ENCODE measurements at regions of chr12 and their contacts with region 1.

Region 1: GRCh38 chr12:51391283-51392162 is at the start of gene GALNT6:
- DNase-seq: peak; percentile 70
- ATAC-seq: peak; percentile 57
- H3K4me3 ChIP-seq: peak within 1 kb of the TSS; percentile 88
- H3K27ac ChIP-seq: peak within 1 kb of the TSS; percentile 97
- H3K4me1 ChIP-seq: peaks cover 80% of the 10 kb centered on the region
- H3K27me3 ChIP-seq: no peaks in the 10 kb centered on the region
- CTCF ChIP-seq: no peak
- total RNA-seq, gene GALNT6: 93.4 and 101 TPM in 2 replicates

Region 2: DNA sequence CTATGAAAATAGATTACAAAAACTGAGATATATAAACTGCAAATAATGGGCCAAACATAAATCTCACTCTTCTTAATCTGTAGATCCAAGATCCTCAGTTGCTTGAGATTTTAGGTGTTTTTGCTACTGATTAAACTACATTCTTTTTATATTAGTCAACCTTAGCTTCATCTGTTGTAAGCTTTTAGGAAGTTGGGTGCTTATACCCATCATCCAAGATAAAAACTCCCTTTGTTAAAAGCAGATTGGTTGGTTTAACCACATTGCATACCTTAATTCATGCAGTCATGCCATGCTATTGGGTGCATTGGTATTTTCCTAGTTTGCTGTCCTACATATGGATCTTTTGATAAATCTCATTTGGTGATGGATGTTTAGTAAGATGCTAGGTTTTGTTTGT is 932.9 kb before region 1 on chr12:
- CTCF ChIA-PET with region 1: no interaction called
- POLR2A ChIA-PET with region 1: interaction called, 24 read pairs
- intact Hi-C with region 1: no loop called
- DNase-seq: peak; percentile 48
- ATAC-seq: no peak
- H3K4me3 ChIP-seq: no peak overlapping the region
- H3K27ac ChIP-seq: no peak overlapping the region
- H3K4me1 ChIP-seq: peaks cover 11% of the 10 kb centered on the region
- H3K27me3 ChIP-seq: no peaks in the 10 kb centered on the region
- CTCF ChIP-seq: no peak

Region 3: GRCh38 chr12:51020448-51021182 is 370.9 kb before region 1 on chr12:
- CTCF ChIA-PET with region 1: no interaction called
- POLR2A ChIA-PET with region 1: no interaction called
- intact Hi-C with region 1: no loop called
- DNase-seq: no peak
- ATAC-seq: no peak
- H3K4me3 ChIP-seq: no peak overlapping the region
- H3K27ac ChIP-seq: no peak overlapping the region
- H3K4me1 ChIP-seq: peaks cover 12% of the 10 kb centered on the region
- H3K27me3 ChIP-seq: no peaks in the 10 kb centered on the region
- CTCF ChIP-seq: no peak

Region 4: DNA sequence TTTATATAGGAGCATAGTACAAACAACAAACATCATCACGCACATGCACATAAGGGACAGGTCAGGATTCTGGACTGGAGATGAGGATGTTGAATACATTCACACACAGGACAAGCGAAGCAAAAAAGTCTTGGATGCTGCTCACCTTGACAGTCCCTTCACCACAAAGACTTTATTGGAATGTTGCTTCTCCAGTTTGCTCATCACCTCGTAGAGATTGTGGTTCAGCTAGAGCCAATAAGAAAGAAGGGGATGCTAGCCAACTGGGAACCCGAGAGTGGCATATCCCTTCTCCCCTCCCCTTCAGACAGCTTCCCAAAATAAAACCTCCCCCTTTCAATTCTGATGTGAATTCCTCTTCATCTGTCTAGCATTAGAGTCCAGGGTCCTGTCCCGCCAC is 95.9 kb before region 1 on chr12:
- CTCF ChIA-PET with region 1: no interaction called
- POLR2A ChIA-PET with region 1: no interaction called
- intact Hi-C with region 1: no loop called
- DNase-seq: peak; percentile 68
- ATAC-seq: no peak
- H3K4me3 ChIP-seq: no peak overlapping the region
- H3K27ac ChIP-seq: no peak overlapping the region
- H3K4me1 ChIP-seq: no peaks in the 10 kb centered on the region
- H3K27me3 ChIP-seq: no peaks in the 10 kb centered on the region
- CTCF ChIP-seq: no peak

Region 5: GRCh38 chr12:51371295-51371953 is 20.1 kb before region 1 on chr12:
- CTCF ChIA-PET with region 1: interaction called, 5 read pairs
- POLR2A ChIA-PET with region 1: interaction called, 6 read pairs
- intact Hi-C with region 1: loop called (anchors 1 kb)
- DNase-seq: peak; percentile 98
- ATAC-seq: peak; percentile 97
- H3K4me3 ChIP-seq: peak overlapping the region; percentile 42
- H3K27ac ChIP-seq: peak overlapping the region; percentile 95
- H3K4me1 ChIP-seq: peaks cover 42% of the 10 kb centered on the region
- H3K27me3 ChIP-seq: no peaks in the 10 kb centered on the region
- CTCF ChIP-seq: no peak

Region 6: GRCh38 chr12:51413791-51414190 is 22.3 kb after region 1 on chr12:
- CTCF ChIA-PET with region 1: no interaction called
- POLR2A ChIA-PET with region 1: interaction called, 13 read pairs
- intact Hi-C with region 1: no loop called
- DNase-seq: peak; percentile 57
- ATAC-seq: peak; percentile 71
- H3K4me3 ChIP-seq: peak overlapping the region; percentile 7; the same call in 1 of the 2 replicates
- H3K27ac ChIP-seq: 0 out of 2 replicates have a peak overlapping the region, but pooled peaks have one; percentile 18
- H3K4me1 ChIP-seq: peaks cover 21% of the 10 kb centered on the region
- H3K27me3 ChIP-seq: no peaks in the 10 kb centered on the region
- CTCF ChIP-seq: no peak